Keratinocyte (primary cell): ENCODE measurements at regions of chr6 and their contacts with region 1.

Region 1: GRCh38 chr6:24991810-24992467 is 56.2 kb upstream of the RIPOR2 start:
- DNase-seq: no peak
- H3K4me3 ChIP-seq: no peak overlapping the region
- H3K27ac ChIP-seq: no peak overlapping the region
- H3K4me1 ChIP-seq: no peaks in the 10 kb centered on the region
- H3K27me3 ChIP-seq: no peaks in the 10 kb centered on the region
- CTCF ChIP-seq: peak; percentile 61 to 79 (median 72)

Region 2: DNA sequence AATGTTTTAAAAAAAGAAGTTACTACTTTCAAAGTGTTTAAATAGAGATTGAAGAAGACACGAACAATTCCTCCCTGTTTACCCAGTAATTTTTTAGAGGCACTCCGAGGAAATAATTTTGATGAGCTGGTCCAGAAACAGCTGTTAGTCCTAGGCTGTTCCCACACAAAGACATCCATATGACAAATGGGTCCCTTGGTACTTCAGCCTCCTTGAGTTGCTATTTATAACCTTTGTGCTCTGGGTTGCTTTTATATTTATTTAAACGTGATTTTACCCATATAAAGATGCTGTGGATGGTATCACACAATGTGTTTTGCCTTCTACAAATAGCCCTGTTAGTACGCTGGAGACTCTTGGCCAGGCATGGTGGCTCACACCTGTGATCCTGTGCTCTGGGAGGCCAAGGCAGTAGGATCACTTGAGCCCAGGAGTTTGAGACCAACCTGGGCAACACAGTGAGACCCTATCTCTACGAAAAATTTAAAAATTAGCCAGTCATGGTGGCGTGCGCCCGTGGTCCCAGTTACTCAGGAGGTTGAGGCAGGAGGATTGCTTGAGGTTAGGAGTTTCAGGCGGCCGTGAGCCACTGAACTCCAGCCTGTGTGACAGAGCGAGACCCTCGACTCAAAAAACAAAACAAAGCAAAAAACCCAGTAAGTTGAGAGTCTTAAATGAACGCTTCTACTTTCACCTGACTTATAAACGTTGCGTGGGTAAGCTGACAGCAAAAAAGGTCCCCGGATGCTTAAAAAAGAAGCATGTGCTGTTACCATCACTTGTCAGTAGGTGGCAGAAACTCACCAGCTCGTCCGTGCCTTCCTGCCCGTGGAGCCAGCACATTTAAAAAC is 136.3 kb before region 1 on chr6:
- dilution Hi-C with region 1: loop called (anchors 25 kb)
- DNase-seq: no peak
- H3K4me3 ChIP-seq: no peak overlapping the region
- H3K27ac ChIP-seq: no peak overlapping the region
- H3K4me1 ChIP-seq: peaks cover 22% of the 10 kb centered on the region
- H3K27me3 ChIP-seq: no peaks in the 10 kb centered on the region
- CTCF ChIP-seq: peak; percentile 77 to 91 (median 85)

Region 3: DNA sequence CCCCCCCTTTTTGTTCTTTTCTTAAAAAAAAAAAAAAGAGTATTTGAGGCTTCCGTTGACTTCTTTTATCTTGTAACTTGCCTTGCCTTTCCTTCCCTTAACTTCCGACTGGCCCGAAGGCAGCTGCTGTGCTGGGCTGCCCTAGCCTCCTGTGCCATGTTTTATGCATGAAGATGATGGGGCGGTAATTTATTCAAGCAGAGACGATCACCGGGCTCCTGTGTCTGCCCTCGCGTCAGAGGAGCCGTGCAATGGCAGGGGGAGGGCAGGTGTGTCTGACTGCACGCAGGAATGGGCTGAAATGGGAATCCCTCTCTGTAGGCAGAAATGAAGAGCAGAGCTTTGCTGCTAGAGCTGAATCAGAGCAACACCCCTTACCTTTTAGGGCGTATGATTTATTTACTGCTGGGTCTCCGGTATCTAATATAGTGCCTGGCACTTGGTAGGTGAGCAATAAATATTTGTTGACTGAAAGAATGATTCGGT is 50.1 kb after region 1 on chr6:
- dilution Hi-C with region 1: no loop called
- DNase-seq: no peak
- H3K4me3 ChIP-seq: no peak overlapping the region
- H3K27ac ChIP-seq: no peak overlapping the region
- H3K4me1 ChIP-seq: no peaks in the 10 kb centered on the region
- H3K27me3 ChIP-seq: no peaks in the 10 kb centered on the region
- CTCF ChIP-seq: no peak

Region 4: DNA sequence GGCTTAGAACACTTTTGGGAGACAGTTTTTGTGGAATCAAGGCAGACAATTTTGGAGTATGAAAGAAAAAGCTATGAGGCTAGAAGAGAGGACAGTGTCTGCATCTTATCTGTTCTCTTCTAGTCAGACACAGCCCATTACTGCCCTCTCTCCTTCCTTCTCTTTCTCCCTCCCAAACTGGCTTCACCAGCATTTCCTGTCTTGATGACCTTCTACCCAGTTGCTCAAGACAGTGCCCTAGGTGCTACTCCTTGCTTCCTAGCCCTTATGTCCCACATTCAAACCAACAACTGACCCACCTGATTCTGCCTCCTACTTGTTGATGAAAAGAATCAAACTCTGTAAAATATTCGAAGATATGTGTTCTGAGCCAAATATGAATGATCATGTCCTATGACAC is 60.2 kb after region 1 on chr6:
- dilution Hi-C with region 1: no loop called
- DNase-seq: no peak
- H3K4me3 ChIP-seq: no peak overlapping the region
- H3K27ac ChIP-seq: no peak overlapping the region
- H3K4me1 ChIP-seq: no peaks in the 10 kb centered on the region
- H3K27me3 ChIP-seq: no peaks in the 10 kb centered on the region
- CTCF ChIP-seq: no peak

Region 5: GRCh38 chr6:25179051-25179778 is 187.3 kb after region 1 on chr6:
- dilution Hi-C with region 1: no loop called
- DNase-seq: no peak
- H3K4me3 ChIP-seq: no peak overlapping the region
- H3K27ac ChIP-seq: no peak overlapping the region
- H3K4me1 ChIP-seq: peaks cover 27% of the 10 kb centered on the region
- H3K27me3 ChIP-seq: no peaks in the 10 kb centered on the region
- CTCF ChIP-seq: no peak